ENCODE measurements at regions of chr7 and their contacts with region 1.

Region 1: GRCh38 chr7:4973728-4974198 is 14.8 kb upstream of the MMD2 start:
- DNase-seq: peak; percentile 91 to 97 (median 94)
- ATAC-seq: peak; percentile 97
- H3K4me3 ChIP-seq: peak overlapping the region; percentile 62 to 65
- H3K4me3 Mint-ChIP-seq: peak overlapping the region; percentile 95
- H3K27ac ChIP-seq: peak overlapping the region; percentile 66 to 79
- H3K27ac Mint-ChIP-seq: peak overlapping the region; percentile 94
- H3K4me1 ChIP-seq: peaks cover 7% of the 10 kb centered on the region
- H3K4me1 Mint-ChIP-seq: peaks cover 35% of the 10 kb centered on the region
- H3K27me3 ChIP-seq: no peaks in the 10 kb centered on the region
- H3K27me3 Mint-ChIP-seq: no peaks in the 10 kb centered on the region
- CTCF ChIP-seq: peak; percentile 73

Region 2: GRCh38 chr7:3733541-3734140 is 1240.1 kb before region 1 on chr7:
- CTCF ChIA-PET with region 1: no interaction called
- POLR2A ChIA-PET with region 1: no interaction called
- intact Hi-C with region 1: no loop called
- DNase-seq: no peak
- ATAC-seq: no peak
- H3K4me3 ChIP-seq: no peak overlapping the region
- H3K4me3 Mint-ChIP-seq: no peak overlapping the region
- H3K27ac ChIP-seq: no peak overlapping the region
- H3K27ac Mint-ChIP-seq: no peak overlapping the region
- H3K4me1 ChIP-seq: no peaks in the 10 kb centered on the region
- H3K4me1 Mint-ChIP-seq: no peaks in the 10 kb centered on the region
- H3K27me3 ChIP-seq: no peaks in the 10 kb centered on the region
- H3K27me3 Mint-ChIP-seq: peaks cover 6% of the 10 kb centered on the region
- CTCF ChIP-seq: no peak

Region 3: GRCh38 chr7:4689668-4690067 is 284.1 kb before region 1 on chr7:
- CTCF ChIA-PET with region 1: no interaction called
- POLR2A ChIA-PET with region 1: no interaction called
- intact Hi-C with region 1: no loop called
- DNase-seq: no peak
- ATAC-seq: no peak
- H3K4me3 ChIP-seq: no peak overlapping the region
- H3K4me3 Mint-ChIP-seq: peak overlapping the region; percentile 35
- H3K27ac ChIP-seq: no peak overlapping the region
- H3K27ac Mint-ChIP-seq: peak overlapping the region; percentile 70
- H3K4me1 ChIP-seq: peaks cover 53% of the 10 kb centered on the region
- H3K4me1 Mint-ChIP-seq: peaks cover 75% of the 10 kb centered on the region
- H3K27me3 ChIP-seq: no peaks in the 10 kb centered on the region
- H3K27me3 Mint-ChIP-seq: no peaks in the 10 kb centered on the region
- CTCF ChIP-seq: no peak

Region 4: DNA sequence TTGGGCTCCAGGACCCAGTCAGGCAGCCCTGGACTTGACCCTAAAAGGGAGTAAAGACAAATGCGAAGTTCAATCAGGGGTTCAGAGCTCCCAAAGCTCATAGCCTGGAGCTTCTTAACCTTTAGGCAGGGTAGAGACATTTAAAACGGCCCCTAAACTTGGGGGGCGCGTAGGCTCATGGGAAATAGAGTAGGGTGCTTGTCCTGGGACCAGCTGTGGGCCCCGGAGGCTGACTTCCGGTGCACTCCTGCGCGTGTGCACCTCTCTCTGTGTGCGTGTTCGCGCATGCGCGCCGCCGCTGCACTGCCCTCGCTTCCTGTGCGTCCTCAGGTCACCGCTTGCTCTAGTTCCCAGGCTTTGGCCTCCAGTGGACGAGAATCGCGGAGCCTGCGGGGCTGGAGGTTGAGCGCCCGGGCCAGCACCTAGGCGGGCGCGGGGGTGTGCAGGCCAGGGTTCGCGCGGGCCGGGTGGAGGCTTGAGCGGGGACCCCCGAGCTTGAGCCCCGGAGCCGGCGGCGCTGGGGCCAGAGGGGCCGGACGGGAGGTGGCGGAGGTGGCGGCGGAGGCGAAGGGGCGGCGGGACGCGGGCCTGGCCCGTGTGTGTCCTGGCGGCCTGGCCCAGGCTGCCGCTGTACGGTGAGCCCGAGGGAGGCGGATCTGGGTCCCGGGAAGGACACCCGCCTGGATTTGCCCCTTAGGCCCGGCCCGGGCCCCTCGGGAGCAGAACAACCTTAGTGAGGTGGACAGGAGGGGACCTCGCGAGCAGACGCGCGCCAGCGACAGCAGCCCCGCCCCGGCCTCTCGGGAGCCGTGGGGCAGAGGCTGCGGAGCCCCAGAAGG is 72.0 kb after region 1 on chr7 and contains the start of gene RBAK:
- CTCF ChIA-PET with region 1: no interaction called
- POLR2A ChIA-PET with region 1: interaction called, 4 read pairs
- intact Hi-C with region 1: loop called (anchors 1 to 2 kb)
- DNase-seq: peak; percentile 75 to 97 (median 90)
- ATAC-seq: peak; percentile 99
- H3K4me3 ChIP-seq: peak within 1 kb of the TSS; percentile 77 to 95
- H3K4me3 Mint-ChIP-seq: peak within 1 kb of the TSS; percentile 88
- H3K27ac ChIP-seq: peak within 1 kb of the TSS; percentile 77 to 79
- H3K27ac Mint-ChIP-seq: peak within 1 kb of the TSS; percentile 93
- H3K4me1 ChIP-seq: peaks cover 11% of the 10 kb centered on the region
- H3K4me1 Mint-ChIP-seq: peaks cover 46% of the 10 kb centered on the region
- H3K27me3 ChIP-seq: no peaks in the 10 kb centered on the region
- H3K27me3 Mint-ChIP-seq: no peaks in the 10 kb centered on the region
- CTCF ChIP-seq: no peak
- total RNA-seq, gene RBAK: 12.9 to 13.6 TPM

Region 5: DNA sequence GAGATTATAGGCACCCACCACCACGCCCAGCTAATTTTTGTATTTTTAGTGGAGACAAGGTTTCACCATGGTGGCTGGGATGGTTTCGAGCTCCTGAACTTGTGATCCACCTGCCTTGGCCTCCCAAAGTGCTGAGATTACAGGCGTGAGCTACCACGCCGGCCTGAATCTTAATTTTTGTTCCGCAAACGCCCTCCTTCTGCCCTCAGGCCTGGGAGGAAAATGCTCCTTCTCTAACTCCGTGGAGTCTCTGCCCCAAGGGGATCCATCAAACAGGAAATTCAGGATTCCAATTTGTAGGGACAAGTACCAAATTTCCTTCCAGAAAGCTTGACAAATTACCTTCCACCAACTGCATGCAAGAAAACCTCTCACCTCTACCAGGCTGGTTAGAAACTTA is 115.1 kb after region 1 on chr7:
- CTCF ChIA-PET with region 1: interaction called, 16 read pairs
- POLR2A ChIA-PET with region 1: interaction called, 4 read pairs
- intact Hi-C with region 1: loop called (anchors 1 kb)
- DNase-seq: no peak
- ATAC-seq: no peak
- H3K4me3 ChIP-seq: no peak overlapping the region
- H3K4me3 Mint-ChIP-seq: no peak overlapping the region
- H3K27ac ChIP-seq: no peak overlapping the region
- H3K27ac Mint-ChIP-seq: no peak overlapping the region
- H3K4me1 ChIP-seq: peaks cover 3% of the 10 kb centered on the region
- H3K4me1 Mint-ChIP-seq: peaks cover 3% of the 10 kb centered on the region
- H3K27me3 ChIP-seq: peaks cover 0 to 2% of the 10 kb centered on the region in 2 experiments
- H3K27me3 Mint-ChIP-seq: no peaks in the 10 kb centered on the region
- CTCF ChIP-seq: no peak

Region 6: DNA sequence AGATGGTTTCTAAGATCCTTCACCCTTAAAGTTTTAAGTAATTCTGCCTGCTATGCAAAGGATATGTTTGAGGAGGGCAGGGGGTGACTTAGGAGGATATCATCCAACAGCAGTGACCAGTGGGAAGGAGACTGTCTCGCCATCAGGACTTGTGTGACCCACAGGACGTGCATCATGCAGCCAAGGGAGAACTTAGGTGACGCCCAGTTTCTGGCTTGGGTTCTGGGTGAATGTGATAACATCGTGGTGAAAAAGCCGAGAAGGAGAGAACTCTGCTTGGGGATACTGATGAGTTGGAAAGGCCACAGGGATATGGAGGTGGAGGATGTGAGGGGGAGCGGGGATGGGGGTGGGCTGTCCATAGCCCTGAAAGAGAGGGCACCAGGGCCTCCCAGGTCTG is 220.1 kb after region 1 on chr7:
- CTCF ChIA-PET with region 1: no interaction called
- POLR2A ChIA-PET with region 1: interaction called, 6 read pairs
- intact Hi-C with region 1: loop called (anchors 1 to 5 kb)
- DNase-seq: no peak
- ATAC-seq: no peak
- H3K4me3 ChIP-seq: no peak overlapping the region
- H3K4me3 Mint-ChIP-seq: no peak overlapping the region
- H3K27ac ChIP-seq: no peak overlapping the region
- H3K27ac Mint-ChIP-seq: no peak overlapping the region
- H3K4me1 ChIP-seq: peaks cover 13% of the 10 kb centered on the region
- H3K4me1 Mint-ChIP-seq: peaks cover 41% of the 10 kb centered on the region
- H3K27me3 ChIP-seq: no peaks in the 10 kb centered on the region
- H3K27me3 Mint-ChIP-seq: no peaks in the 10 kb centered on the region
- CTCF ChIP-seq: no peak

Region 7: DNA sequence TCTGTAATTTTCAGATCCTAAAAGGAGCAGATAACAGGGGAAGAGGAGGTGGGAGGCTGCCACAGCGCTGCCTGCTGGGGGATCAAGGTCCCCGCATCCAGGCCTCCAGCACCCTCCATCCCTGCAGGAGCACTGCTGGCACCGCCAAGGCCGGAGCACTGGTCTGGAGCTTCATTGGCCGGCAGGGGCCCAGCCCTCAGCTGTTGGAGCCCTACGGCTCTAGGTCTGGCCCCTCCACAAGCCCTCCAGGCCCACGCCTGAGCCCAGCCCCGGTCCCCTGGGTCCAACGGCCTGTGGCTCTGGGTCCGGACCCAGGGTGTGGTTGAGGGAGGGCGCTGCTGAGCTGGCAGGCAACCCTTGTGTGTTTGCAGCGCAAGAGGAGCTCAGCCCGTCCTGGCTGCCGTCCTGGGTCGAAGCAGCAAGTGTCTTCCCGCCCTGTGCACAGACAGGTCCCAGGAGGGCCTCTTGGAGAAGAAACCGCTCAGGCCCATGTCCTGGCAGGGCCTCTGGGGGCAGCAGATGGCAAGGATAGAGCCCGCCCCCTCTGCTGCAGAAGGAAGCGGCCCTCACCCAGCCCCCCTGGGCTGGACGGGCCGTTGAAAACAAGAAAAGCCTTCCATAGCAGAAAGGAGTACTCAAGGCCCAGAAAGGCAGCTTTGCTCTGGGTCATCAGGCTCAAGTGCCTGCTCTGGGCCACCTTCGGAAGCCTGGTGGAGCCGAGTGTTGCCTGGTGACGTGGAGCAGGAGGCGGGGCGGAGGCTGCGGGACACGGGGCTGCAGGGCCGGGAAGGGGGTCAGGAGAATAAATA is 504.2 kb after region 1 on chr7:
- CTCF ChIA-PET with region 1: no interaction called
- POLR2A ChIA-PET with region 1: no interaction called
- intact Hi-C with region 1: no loop called
- DNase-seq: peak in 1 of 9 experiments; percentile 27
- ATAC-seq: no peak
- H3K4me3 ChIP-seq: peak overlapping the region in 1 of 2 experiments; percentile 12
- H3K4me3 Mint-ChIP-seq: peak overlapping the region; percentile 67
- H3K27ac ChIP-seq: no peak overlapping the region
- H3K27ac Mint-ChIP-seq: no peak overlapping the region
- H3K4me1 ChIP-seq: no peaks in the 10 kb centered on the region
- H3K4me1 Mint-ChIP-seq: peaks cover 2% of the 10 kb centered on the region
- H3K27me3 ChIP-seq: no peaks in the 10 kb centered on the region
- H3K27me3 Mint-ChIP-seq: no peaks in the 10 kb centered on the region
- CTCF ChIP-seq: no peak

Region 8: GRCh38 chr7:5780801-5781496 is 807.2 kb after region 1 on chr7:
- CTCF ChIA-PET with region 1: no interaction called
- POLR2A ChIA-PET with region 1: no interaction called
- intact Hi-C with region 1: loop called in 1 of 2 experiments (anchors 5 kb)
- DNase-seq: peak; percentile 7 to 62 (median 42)
- ATAC-seq: peak; percentile 10
- H3K4me3 ChIP-seq: peak overlapping the region; percentile 55 to 60
- H3K4me3 Mint-ChIP-seq: peak overlapping the region; percentile 87
- H3K27ac ChIP-seq: peak overlapping the region; percentile 55 to 71
- H3K27ac Mint-ChIP-seq: peak overlapping the region; percentile 87
- H3K4me1 ChIP-seq: peaks cover 34% of the 10 kb centered on the region
- H3K4me1 Mint-ChIP-seq: peaks cover 38% of the 10 kb centered on the region
- H3K27me3 ChIP-seq: no peaks in the 10 kb centered on the region
- H3K27me3 Mint-ChIP-seq: no peaks in the 10 kb centered on the region
- CTCF ChIP-seq: no peak